Activated T-helper 1 cell treated with anti-CD3 and anti-CD28 coated beads, Interleukin-12 subunit alpha, Interleukin-12 subunit beta, Interleukin-2, Interleukin-4 antibody, amounts not matched to agents 30 ng/mL and 10 ng/mL and 1 ng/mL, durations not matched to agents 14 hours and 24 hours and 36 hours (primary cell): ENCODE measurements at regions of chr22 and their contacts with region 1.

Region 1: GRCh38 chr22:19109198-19110067 is 12.8 kb downstream of the DGCR2 start:
- DNase-seq: peak; percentile 42
- H3K4me3 Mint-ChIP-seq: peak overlapping the region; percentile 66
- H3K27ac Mint-ChIP-seq: peak overlapping the region; percentile 62
- H3K4me1 Mint-ChIP-seq: peaks cover 54% of the 10 kb centered on the region
- H3K27me3 Mint-ChIP-seq: no peaks in the 10 kb centered on the region

Region 2: GRCh38 chr22:18987765-18988164 is 121.7 kb before region 1 on chr22:
- intact Hi-C with region 1: no loop called
- DNase-seq: no peak
- H3K4me3 Mint-ChIP-seq: no peak overlapping the region
- H3K27ac Mint-ChIP-seq: no peak overlapping the region
- H3K4me1 Mint-ChIP-seq: no peaks in the 10 kb centered on the region
- H3K27me3 Mint-ChIP-seq: peaks cover 4% of the 10 kb centered on the region

Region 3: DNA sequence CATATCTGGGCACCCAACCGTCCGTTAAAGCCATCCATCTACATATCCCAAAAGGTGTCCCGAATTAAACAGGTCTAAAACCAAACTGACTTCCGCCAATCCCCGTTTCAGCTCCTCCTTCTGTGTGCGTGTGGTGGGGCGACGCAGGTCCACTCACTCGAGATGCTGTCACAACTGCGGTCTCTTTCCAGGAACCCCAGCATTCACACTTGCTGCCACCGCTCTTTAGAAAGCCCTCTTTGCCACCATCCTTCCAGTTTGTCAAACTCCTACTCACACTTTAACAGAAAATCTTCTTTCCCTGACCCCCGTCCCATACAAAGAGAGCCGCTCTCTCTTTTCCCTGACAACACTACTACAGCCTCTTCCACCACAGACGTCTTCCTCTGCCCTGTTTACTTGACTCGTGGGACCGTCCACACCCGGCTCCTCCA is 34.6 kb after region 1 on chr22:
- intact Hi-C with region 1: loop called (anchors 1 kb)
- DNase-seq: peak; percentile 40
- H3K4me3 Mint-ChIP-seq: peak overlapping the region; percentile 98
- H3K27ac Mint-ChIP-seq: peak overlapping the region; percentile 97
- H3K4me1 Mint-ChIP-seq: peaks cover 23% of the 10 kb centered on the region
- H3K27me3 Mint-ChIP-seq: peaks cover 22% of the 10 kb centered on the region

Region 4: GRCh38 chr22:19341500-19341899 is 232.1 kb after region 1 on chr22:
- intact Hi-C with region 1: no loop called
- DNase-seq: no peak
- H3K4me3 Mint-ChIP-seq: no peak overlapping the region
- H3K27ac Mint-ChIP-seq: no peak overlapping the region
- H3K4me1 Mint-ChIP-seq: no peaks in the 10 kb centered on the region
- H3K27me3 Mint-ChIP-seq: no peaks in the 10 kb centered on the region